Activated T-helper 1 cell treated with anti-CD3 and anti-CD28 coated beads, Interleukin-12 subunit alpha, Interleukin-12 subunit beta, Interleukin-2, Interleukin-4 antibody, amounts not matched to agents 30 ng/mL and 10 ng/mL and 1 ng/mL, durations not matched to agents 14 hours and 24 hours and 36 hours (primary cell): ENCODE measurements at regions of chr7 and their contacts with region 1.

Region 1: GRCh38 chr7:11355399-11356005 is 381.8 kb downstream of the PHF14 start:
- DNase-seq: no peak
- H3K4me3 Mint-ChIP-seq: no peak overlapping the region
- H3K27ac Mint-ChIP-seq: no peak overlapping the region
- H3K4me1 Mint-ChIP-seq: no peaks in the 10 kb centered on the region
- H3K27me3 Mint-ChIP-seq: no peaks in the 10 kb centered on the region

Region 2: DNA sequence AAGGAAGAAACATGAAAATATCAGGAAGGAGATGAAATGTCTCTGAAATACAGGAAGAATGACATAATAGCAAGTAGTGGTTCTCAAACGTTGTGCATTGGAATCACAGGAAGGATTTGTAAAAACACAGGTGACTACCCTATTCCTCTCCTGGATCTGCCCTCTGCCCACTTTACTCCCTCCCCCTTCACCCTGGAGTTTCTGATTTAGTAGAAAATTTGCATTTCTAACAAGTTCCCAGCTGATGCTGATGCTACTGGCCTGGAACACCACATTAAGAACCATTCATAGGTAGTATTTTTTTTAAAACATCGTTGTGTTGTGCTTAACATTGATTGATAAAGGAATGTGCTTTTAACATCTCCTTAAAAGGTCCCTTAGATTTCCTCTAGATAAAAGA is 250.9 kb before region 1 on chr7:
- intact Hi-C with region 1: no loop called
- DNase-seq: no peak
- H3K4me3 Mint-ChIP-seq: no peak overlapping the region
- H3K27ac Mint-ChIP-seq: no peak overlapping the region
- H3K4me1 Mint-ChIP-seq: peaks cover 5% of the 10 kb centered on the region
- H3K27me3 Mint-ChIP-seq: no peaks in the 10 kb centered on the region

Region 3: DNA sequence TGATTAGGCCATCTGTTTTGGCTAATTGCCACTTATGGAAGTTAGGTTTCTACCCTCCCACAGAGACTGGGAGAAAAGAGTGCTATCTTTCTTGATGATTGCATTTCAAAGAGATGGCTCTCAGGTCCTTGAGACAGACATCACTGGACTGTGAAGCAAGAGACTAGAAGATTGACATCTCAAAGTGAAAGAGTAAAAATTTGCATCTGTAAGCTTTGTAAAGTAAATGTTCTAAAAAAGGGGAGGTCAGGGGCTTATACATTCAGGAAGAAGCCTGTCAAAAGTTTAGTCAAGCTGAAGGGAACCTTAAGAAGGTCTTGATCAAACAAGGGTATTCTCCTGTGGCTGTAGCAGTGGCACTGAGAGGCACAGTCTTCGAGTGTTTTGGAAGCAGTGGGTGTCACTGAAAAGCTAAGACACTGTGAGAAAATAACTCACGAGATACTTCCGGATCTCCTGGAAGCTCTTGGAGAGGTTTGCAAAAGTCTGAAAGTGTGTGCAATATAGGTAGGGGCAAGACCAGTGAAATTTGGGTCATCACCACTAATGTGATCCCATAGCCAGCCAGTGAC is 39.7 kb before region 1 on chr7:
- intact Hi-C with region 1: loop called (anchors 5 kb)
- DNase-seq: no peak
- H3K4me3 Mint-ChIP-seq: no peak overlapping the region
- H3K27ac Mint-ChIP-seq: no peak overlapping the region
- H3K4me1 Mint-ChIP-seq: no peaks in the 10 kb centered on the region
- H3K27me3 Mint-ChIP-seq: no peaks in the 10 kb centered on the region